Left colon (tissue), 2 donors: ENCODE measurements at regions of chr6 and their contacts with region 1.

Region 1: DNA sequence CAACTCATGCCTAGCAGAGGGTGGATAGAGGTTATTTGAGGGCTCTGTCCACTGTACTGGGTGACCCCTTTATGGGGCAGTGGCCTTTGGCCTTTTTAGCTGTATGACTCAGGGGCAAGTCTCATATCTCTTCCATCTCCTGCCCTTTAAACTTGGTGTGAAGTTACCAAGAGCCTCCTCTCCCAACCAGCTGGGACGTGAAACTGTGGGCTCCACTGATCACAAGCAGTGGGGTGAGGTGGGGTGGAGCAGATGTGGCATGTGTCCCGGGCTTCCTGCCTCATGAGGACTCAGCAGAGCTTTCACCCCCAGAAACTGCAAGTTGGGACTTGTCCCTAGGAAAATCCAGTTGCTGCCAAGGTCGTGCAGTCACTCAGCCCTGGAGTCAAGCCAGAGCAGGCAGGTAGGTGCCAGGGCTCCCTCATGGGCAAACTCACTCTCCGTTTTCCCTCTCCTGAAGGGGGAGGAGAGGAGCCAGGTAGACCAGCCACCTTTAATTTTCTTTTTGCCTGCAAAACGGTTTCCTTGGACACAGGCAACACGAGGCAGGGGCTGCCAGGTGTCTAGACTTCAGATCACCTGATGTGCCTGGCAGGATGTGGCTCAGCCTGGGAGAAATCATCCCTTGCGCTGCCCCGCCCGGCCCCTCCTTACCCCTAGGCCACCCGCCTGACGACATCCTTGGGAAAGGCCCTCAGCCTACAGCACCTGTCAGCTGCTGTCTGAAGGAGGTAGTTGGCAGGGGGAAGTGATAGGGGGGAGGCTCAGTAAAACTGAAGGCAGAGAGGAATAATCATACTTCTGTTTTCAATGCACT is 4.0 kb downstream of the CDKN1A start:
- DNase-seq: peak; percentile 83 to 89
- ATAC-seq: peak; percentile 31

Region 2: DNA sequence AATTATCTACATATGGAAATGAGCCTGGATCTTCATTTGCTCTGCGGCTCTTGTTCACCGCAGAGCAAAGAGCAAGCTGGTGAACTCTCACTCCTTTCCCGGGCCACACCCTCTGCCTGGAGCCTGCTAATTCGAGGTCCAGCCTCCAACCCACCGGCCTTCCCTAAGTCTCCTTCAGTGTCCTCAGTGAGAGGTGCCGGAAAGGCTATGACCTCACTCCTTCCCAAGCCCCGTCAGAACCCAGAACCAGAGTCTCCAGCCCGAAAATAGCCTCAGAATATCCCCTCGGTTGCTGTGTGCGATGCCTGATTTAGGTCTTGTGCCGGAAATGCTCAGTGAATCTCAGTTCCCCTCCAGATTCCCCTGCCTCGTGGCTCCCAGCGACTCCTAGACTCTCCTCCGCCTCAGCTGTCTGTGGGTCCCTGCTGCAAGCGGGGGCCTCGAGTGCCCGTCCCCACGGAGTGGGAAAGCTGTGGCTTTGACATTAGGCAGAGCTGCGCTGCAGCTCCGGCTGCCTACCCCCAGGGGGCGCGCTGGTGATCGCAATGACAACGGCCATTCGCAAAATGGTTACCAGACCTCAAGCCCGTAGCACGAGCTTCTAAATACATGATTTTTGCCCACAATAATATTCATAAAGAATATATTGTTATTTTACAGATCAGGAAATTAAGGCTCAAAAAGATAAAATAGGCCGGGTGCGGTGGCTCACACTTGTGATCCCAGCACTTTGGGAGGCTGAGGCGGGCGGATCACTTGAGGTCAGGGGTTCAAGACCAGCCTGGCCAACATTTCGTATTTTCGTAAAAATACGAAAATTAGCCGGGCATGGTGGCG is 341.7 kb before region 1 on chr6:
- intact Hi-C with region 1: no loop called
- DNase-seq: peak; percentile 89
- ATAC-seq: peak; percentile 74

Region 3: DNA sequence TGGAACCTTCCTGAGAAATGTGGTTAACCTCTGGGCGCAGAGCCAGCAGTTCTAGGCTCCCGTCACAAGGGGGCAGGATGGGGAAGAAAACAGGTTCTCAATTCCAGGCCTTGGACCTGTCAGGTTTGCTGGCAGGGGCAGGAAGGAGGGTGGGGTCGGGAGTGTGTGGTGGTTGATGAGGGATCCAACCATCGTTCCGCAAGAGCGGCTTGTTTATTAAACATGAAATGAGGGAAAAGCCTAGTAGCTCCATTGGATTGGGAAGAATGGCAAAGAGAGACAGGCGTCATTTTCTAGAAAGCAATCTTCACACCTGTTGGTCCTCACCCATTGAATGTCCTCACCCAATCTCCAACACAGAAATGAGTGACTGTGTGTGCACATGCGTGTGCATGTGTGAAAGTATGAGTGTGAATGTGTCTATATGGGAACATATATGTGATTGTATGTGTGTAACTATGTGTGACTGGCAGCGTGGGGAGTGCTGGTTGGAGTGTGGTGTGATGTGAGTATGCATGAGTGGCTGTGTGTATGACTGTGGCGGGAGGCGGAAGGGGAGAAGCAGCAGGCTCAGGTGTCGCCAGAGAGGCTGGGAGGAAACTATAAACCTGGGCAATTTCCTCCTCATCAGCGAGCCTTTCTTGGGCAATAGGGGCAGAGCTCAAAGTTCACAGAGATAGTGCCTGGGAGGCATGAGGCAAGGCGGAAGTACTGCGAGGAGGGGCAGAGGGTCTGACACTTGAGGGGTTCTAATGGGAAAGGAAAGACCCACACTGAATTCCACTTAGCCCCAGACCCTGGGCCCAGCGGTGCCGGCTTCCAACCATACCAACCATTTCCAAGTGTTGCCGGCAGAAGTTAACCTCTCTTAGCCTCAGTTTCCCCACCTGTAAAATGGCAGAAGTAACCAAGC is 58.7 kb before region 1 on chr6:
- intact Hi-C with region 1: loop called (anchors 5 kb)
- DNase-seq: peak; percentile 90
- ATAC-seq: peak; percentile 84